ENCODE measurements at regions of chr2 and their contacts with region 1.

Region 1: DNA sequence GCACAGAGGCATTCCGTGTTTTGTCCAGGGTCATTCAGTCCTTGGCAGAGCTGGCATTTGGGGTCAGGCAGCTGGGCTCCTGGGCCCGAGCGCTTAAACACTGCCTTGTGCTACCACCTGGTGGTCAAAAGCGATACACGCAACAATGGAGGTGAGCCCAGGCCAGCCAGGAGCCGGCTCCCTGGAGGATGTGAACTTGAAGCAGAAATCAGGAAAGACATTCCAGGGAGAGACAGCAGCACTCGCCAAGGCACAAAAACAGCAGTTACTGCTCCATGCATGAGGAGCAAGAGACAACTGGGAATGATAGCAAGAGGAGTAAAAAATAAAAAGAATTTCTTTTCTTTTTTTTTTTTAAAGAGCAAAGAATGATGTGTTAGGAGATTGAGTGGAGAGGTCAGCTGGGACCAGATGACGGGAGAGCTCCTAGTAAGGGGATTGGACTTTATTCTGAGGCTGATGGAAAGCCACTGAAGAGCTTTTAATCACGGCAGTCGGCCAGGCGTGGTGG is 20.7 kb downstream of the SCYGR8 start:
- DNase-seq: peak; percentile 78
- ATAC-seq: peak; percentile 92
- H3K4me3 Mint-ChIP-seq: no peak overlapping the region
- H3K27ac Mint-ChIP-seq: no peak overlapping the region
- H3K4me1 Mint-ChIP-seq: no peaks in the 10 kb centered on the region
- H3K27me3 Mint-ChIP-seq: no peaks in the 10 kb centered on the region

Region 2: GRCh38 chr2:227132986-227133385 is 633.4 kb before region 1 on chr2:
- CTCF ChIA-PET with region 1: interaction called, 6 read pairs
- POLR2A ChIA-PET with region 1: no interaction called
- intact Hi-C with region 1: loop called (anchors 1 to 2 kb)
- DNase-seq: no peak
- ATAC-seq: no peak
- H3K4me3 Mint-ChIP-seq: no peak overlapping the region
- H3K27ac Mint-ChIP-seq: no peak overlapping the region
- H3K4me1 Mint-ChIP-seq: no peaks in the 10 kb centered on the region
- H3K27me3 Mint-ChIP-seq: peaks cover 7% of the 10 kb centered on the region

Region 3: GRCh38 chr2:227406177-227407031 is 360.0 kb before region 1 on chr2:
- CTCF ChIA-PET with region 1: interaction called, 9 read pairs
- POLR2A ChIA-PET with region 1: no interaction called
- intact Hi-C with region 1: loop called (anchors 1 kb)
- DNase-seq: peak; percentile 43
- ATAC-seq: no peak
- H3K4me3 Mint-ChIP-seq: no peak overlapping the region
- H3K27ac Mint-ChIP-seq: peak overlapping the region; percentile 14
- H3K4me1 Mint-ChIP-seq: peaks cover 52% of the 10 kb centered on the region
- H3K27me3 Mint-ChIP-seq: no peaks in the 10 kb centered on the region

Region 4: DNA sequence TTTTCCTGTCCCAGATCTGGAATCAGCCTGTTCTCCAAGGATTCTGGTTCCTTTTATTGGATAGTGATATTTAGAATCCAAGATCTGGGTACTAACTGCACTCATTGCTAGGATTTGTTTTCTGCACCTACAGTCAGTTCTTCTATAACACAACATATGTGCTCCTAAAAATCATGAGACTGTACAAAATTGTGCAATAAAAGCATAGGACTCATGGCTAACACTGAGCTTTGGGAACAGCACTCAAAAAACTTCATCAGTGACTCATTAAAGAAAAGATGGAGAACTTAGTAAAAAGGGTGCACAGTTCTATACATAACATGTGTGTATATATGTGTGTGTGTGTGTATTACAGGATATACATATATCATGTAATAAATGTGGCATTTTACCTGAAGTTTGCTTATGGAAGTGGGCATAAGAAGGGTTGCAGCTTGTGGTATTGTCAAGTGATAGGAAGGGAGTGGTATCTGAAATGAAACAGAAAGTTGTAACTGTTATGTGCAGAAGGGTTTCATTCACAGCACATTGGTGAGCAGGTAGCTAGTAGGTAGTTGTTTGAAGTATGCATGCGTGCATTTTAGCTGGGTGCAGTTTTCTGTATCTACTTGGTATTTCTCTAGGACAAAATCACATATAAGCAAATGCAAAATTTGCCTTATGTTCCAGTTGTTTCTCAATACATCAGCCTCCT is 173.6 kb before region 1 on chr2:
- CTCF ChIA-PET with region 1: no interaction called
- POLR2A ChIA-PET with region 1: no interaction called
- intact Hi-C with region 1: no loop called
- DNase-seq: no peak
- ATAC-seq: no peak
- H3K4me3 Mint-ChIP-seq: no peak overlapping the region
- H3K27ac Mint-ChIP-seq: no peak overlapping the region
- H3K4me1 Mint-ChIP-seq: peaks cover 3% of the 10 kb centered on the region
- H3K27me3 Mint-ChIP-seq: peaks cover 31% of the 10 kb centered on the region

Region 5: GRCh38 chr2:227655454-227655853 is 111.0 kb before region 1 on chr2:
- CTCF ChIA-PET with region 1: interaction called, 55 read pairs
- POLR2A ChIA-PET with region 1: no interaction called
- intact Hi-C with region 1: loop called (anchors 1 kb)
- DNase-seq: no peak
- ATAC-seq: peak; percentile 84
- H3K4me3 Mint-ChIP-seq: no peak overlapping the region
- H3K27ac Mint-ChIP-seq: no peak overlapping the region
- H3K4me1 Mint-ChIP-seq: peaks cover 5% of the 10 kb centered on the region
- H3K27me3 Mint-ChIP-seq: peaks cover 12% of the 10 kb centered on the region